Adrenal gland (tissue), 19 donors: ENCODE measurements at regions of chrX and their contacts with region 1.

Region 1: GRCh38 chrX:47193475-47194193 is at the start of gene UBA1:
- DNase-seq: peak; percentile 94 to 99 (median 97)
- H3K4me3 ChIP-seq: peak within 1 kb of the TSS in 3 of 4 donors; percentile 25 to 94 (median 75)
- H3K27ac ChIP-seq: peak within 1 kb of the TSS; percentile 69 to 99 (median 93)
- H3K4me1 ChIP-seq: peaks cover 38 to 47% of the 10 kb centered on the region in 2 donors
- H3K27me3 ChIP-seq: no peaks in the 10 kb centered on the region
- CTCF ChIP-seq: peak; percentile 79 to 98 (median 90)
- POLR2A ChIP-seq: peak; percentile 71 to 89
- total RNA-seq, gene UBA1: 167 to 356 (median 235) TPM

Region 2: DNA sequence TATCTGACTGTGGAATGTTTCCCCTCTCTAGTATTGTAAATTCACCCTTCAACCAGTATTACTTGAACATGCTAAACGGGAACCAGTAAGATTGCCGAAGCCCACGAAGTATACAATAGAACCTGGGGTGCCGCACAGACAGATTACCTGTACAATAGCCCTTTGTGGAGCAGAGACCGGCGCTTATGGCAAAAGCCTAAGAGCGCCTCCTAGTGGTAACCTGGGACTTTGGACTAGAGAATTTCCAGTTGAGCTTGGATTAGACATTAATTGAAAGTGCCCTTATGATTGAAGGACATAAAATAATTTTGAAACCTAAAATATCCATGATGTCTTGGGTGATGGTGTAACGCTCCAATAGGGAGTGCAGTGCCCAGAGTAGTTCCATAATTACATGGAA is 190.9 kb after region 1 on chrX:
- intact Hi-C with region 1: loop called in 1 of 2 experiments (anchors 10 kb)
- DNase-seq: peak; percentile 59 to 84 (median 66)
- H3K4me3 ChIP-seq: no peak overlapping the region
- H3K27ac ChIP-seq: no peak overlapping the region
- H3K4me1 ChIP-seq: no peaks in the 10 kb centered on the region
- H3K27me3 ChIP-seq: no peaks in the 10 kb centered on the region
- CTCF ChIP-seq: peak; percentile 54 to 83 (median 64)
- POLR2A ChIP-seq: no peak

Region 3: DNA sequence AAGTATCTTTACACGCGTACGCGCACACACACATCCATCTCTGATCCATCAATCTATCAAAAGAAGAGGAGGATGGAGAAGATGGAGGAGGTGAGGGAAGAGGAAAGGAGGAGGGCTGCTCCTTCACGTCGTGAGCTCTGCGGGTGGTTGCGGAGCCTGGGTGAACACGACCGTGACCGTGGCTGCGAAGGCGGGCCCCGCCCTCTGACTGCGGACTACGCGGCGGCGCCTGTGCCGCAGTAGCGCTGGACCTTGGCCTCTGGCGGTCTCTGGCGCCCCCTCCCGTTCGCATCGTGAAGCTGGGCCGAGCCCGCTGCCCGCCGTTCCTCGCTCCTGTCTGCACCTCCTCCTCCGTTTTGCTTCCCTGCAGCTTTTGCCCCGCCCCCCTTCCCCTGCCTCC is 329.7 kb after region 1 on chrX:
- intact Hi-C with region 1: loop called in 1 of 2 experiments (anchors 10 kb)
- DNase-seq: peak; percentile 69 to 91 (median 83)
- H3K4me3 ChIP-seq: peak overlapping the region in 2 of 4 donors; percentile 25 to 62
- H3K27ac ChIP-seq: no peak overlapping the region
- H3K4me1 ChIP-seq: no peaks in the 10 kb centered on the region
- H3K27me3 ChIP-seq: no peaks in the 10 kb centered on the region
- CTCF ChIP-seq: peak; percentile 59 to 89 (median 72)
- POLR2A ChIP-seq: peak in 1 of 2 donors; percentile 11

Region 4: GRCh38 chrX:47690175-47690574 is 496.5 kb after region 1 on chrX:
- intact Hi-C with region 1: no loop called
- DNase-seq: no peak
- H3K4me3 ChIP-seq: no peak overlapping the region
- H3K27ac ChIP-seq: no peak overlapping the region
- H3K4me1 ChIP-seq: no peaks in the 10 kb centered on the region
- H3K27me3 ChIP-seq: no peaks in the 10 kb centered on the region
- CTCF ChIP-seq: no peak
- POLR2A ChIP-seq: no peak